RWPE1 (cell line): ENCODE measurements at regions of chr19 and their contacts with region 1.

Region 1: DNA sequence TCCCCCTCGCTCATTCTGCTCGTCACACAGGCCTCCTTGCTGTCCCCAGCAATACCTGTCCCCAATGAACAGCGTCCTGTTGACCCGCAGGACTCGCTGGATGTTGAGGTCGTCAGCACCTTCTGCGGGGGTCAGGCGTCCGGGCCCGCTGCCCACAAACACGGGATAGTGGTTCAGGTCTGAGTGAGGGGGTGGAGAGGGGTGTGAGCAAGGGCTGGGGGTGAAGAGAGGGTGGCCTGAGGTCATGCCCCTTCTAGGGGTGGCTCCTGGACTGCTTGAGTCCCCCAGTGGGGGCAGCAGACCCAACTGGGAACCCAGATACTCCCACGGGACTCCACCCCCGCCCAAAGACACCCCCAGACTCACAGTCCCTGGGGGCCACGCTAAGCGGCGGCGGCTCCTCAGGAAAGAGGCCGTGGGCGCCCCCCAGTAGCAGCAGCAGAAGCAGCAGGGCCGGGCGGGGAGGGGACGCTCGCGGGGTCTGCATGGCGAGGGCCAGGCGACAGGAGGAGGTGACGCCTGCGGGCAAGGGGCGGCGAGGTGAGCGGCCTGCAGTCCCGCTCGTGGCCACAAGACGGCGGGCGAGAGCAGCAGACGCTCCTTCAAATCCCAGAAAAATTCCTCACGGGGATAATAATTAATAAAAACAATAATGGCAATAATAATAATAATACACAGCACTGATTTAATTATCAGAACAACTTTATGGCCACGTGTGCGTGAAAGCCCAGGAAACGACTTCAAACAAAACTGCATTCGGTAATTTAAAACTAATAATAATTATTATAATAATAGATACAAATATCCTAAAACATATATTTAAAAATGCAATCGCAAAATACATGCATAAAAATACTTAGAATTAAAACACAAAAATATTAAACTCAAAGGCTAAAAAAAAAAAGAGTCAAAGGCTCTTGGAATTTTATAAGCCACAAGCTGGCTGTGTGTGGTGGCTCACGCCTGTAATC is 1.2 kb downstream of the SEMA6B start:
- DNase-seq: no peak
- H3K27ac ChIP-seq: no peak overlapping the region
- CTCF ChIP-seq: peak; percentile 98

Region 2: DNA sequence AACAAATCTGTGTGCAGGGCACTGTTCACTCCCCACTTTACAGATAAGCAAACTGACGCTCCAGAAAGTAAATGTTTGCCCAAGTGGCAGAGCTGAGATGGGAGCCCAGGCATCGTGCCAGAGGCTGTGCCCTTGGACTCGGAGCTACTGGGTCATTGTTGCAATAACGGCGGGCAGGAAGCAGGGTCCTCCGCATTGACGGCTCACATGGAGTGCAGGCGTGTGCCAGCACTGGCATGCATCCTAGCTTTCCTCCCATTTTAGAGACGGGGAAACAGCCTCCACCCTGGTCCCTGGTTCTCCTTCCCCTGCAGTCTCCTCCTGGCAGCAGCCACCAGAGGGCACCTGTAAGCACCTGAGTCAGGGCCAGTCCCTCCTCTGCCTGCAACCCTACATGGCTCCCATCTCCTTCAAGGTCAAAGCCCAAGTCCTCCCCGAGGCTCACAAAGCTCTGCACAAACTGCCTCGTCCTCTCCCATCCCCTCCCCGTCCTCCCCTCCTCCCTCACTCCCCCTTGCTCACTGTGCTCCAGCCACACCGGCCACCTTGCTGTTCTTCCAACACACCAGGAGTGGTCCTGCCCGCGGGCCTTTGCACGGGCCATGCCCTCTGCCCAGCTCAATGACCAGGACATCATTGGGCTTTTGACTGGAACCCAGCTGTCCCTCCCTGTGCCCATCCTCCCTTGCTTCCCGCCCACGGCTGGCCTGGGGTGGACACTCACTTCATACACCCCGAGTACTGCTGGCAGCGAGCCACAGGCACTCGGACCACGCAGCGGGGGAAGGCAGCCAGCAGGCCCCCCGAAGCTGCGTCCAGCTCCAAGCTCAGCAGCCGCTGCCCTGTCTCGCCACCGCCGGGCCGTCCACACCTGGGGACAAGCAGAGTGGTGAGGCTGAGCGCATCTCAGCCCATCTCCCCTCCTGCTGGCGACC is 10.7 kb before region 1 on chr19:
- CTCF ChIA-PET with region 1: interaction called, 11 read pairs
- POLR2A ChIA-PET with region 1: no interaction called
- DNase-seq: no peak
- H3K27ac ChIP-seq: no peak overlapping the region
- CTCF ChIP-seq: peak; percentile 27; the same call in 1 of the 2 replicates